Right cardiac atrium (tissue), 5 donors: ENCODE measurements at regions of chr12 and their contacts with region 1.

Region 1: GRCh38 chr12:18861287-18861858 is 123.5 kb downstream of the CAPZA3 start:
- DNase-seq: no peak
- ATAC-seq: no peak
- H3K4me3 ChIP-seq: no peak overlapping the region
- H3K27ac ChIP-seq: no peak overlapping the region
- H3K4me1 ChIP-seq: no peaks in the 10 kb centered on the region
- H3K27me3 ChIP-seq: no peaks in the 10 kb centered on the region

Region 2: GRCh38 chr12:19129486-19130223 is 268.3 kb after region 1 on chr12 and contains the start of gene PLEKHA5:
- intact Hi-C with region 1: loop called in 1 of 4 experiments (anchors 10 kb)
- DNase-seq: peak; percentile 79 to 93 (median 92)
- ATAC-seq: peak; percentile 96
- H3K4me3 ChIP-seq: peak within 1 kb of the TSS; percentile 98
- H3K27ac ChIP-seq: peak within 1 kb of the TSS; percentile 94
- H3K4me1 ChIP-seq: no peaks in the 10 kb centered on the region
- H3K27me3 ChIP-seq: no peaks in the 10 kb centered on the region
- total RNA-seq, gene PLEKHA5: 51.0 to 88.0 (median 74.8) TPM